A673 (cell line): ENCODE measurements at regions of chr2 and their contacts with region 1.

Region 1: DNA sequence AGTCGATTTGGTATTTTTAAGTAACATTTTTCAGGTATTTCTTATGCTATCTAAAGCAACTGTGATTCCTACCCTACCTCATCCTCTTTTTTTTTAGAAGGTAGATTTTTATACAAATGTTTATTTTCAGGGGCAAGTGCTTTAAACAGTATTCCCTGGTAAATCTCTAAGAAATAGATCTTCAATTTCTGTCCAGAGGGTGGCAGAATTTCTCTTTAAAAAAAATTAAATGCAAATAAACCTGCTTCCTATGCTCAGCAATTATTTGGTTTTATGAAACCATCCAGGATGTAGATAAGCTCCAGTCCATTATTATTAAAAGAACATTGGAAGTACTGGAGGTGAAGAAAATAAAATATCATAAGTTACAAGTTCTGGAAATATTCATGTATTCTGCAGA is 191.9 kb downstream of the MYO3B start:
- DNase-seq: peak; percentile 67
- H3K4me3 ChIP-seq: no peak overlapping the region
- H3K27ac ChIP-seq: no peak overlapping the region
- H3K4me1 ChIP-seq: no peaks in the 10 kb centered on the region
- H3K27me3 ChIP-seq: peaks cover 43% of the 10 kb centered on the region
- CTCF ChIP-seq: peak; percentile 54; the same call in 1 of the 2 replicates

Region 2: DNA sequence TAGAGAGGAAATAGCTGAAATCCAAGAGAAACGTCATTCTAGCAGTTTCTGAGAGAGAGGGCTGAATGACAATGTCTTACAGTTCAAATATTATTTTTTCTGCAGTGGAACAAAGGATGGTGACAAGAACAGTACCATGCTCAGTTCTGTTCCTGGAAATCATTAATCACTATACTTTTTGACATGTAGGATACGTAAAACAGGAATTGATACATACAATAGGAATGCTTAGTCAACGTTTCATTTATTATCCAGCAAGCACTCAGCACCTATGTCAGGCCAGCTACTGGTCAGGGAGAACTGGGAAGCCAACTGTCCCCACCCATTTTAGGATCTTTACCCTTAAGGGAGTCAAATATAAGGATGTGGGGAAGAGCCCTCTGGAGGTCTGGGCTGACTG is 1185.8 kb before region 1 on chr2:
- CTCF ChIA-PET with region 1: no interaction called
- POLR2A ChIA-PET with region 1: no interaction called
- intact Hi-C with region 1: no loop called
- DNase-seq: no peak
- H3K4me3 ChIP-seq: no peak overlapping the region
- H3K27ac ChIP-seq: no peak overlapping the region
- H3K4me1 ChIP-seq: no peaks in the 10 kb centered on the region
- H3K27me3 ChIP-seq: no peaks in the 10 kb centered on the region
- CTCF ChIP-seq: no peak

Region 3: GRCh38 chr2:169452080-169452479 is 917.8 kb before region 1 on chr2:
- CTCF ChIA-PET with region 1: no interaction called
- POLR2A ChIA-PET with region 1: no interaction called
- intact Hi-C with region 1: loop called (anchors 5 kb)
- DNase-seq: peak; percentile 71
- H3K4me3 ChIP-seq: no peak overlapping the region
- H3K27ac ChIP-seq: no peak overlapping the region
- H3K4me1 ChIP-seq: no peaks in the 10 kb centered on the region
- H3K27me3 ChIP-seq: no peaks in the 10 kb centered on the region
- CTCF ChIP-seq: peak; percentile 65

Region 4: DNA sequence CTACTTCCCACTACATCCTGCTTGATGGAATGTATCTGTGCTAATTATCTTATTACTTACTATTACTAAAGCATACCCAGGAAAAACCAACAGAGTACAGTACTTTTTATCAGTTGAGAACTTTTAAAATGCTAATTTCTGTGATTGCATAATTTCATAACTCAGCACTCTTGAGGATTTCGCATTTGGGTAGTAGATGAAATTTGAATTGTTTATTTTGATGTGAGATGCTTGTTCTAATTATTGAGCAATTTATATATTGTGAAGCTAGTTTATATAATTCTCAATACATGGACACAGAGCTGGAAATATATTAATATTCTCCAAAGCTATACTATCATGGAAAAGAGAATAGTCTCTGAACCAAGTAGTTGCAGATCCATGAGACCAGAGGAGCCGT is 240.7 kb after region 1 on chr2:
- CTCF ChIA-PET with region 1: no interaction called
- POLR2A ChIA-PET with region 1: interaction called, 14 read pairs
- intact Hi-C with region 1: no loop called
- DNase-seq: peak; percentile 11
- H3K4me3 ChIP-seq: no peak overlapping the region
- H3K27ac ChIP-seq: no peak overlapping the region
- H3K4me1 ChIP-seq: no peaks in the 10 kb centered on the region
- H3K27me3 ChIP-seq: no peaks in the 10 kb centered on the region
- CTCF ChIP-seq: no peak